ENCODE measurements at regions of chr7 and their contacts with region 1.

Region 1: GRCh38 chr7:118590107-118590506 is 365.6 kb downstream of the ANKRD7 start:
- DNase-seq: peak; percentile 20
- H3K4me3 ChIP-seq: no peak overlapping the region
- H3K27ac ChIP-seq: no peak overlapping the region
- H3K4me1 ChIP-seq: no peaks in the 10 kb centered on the region
- H3K27me3 ChIP-seq: peaks cover 2% of the 10 kb centered on the region
- CTCF ChIP-seq: peak; percentile 18 to 55

Region 2: DNA sequence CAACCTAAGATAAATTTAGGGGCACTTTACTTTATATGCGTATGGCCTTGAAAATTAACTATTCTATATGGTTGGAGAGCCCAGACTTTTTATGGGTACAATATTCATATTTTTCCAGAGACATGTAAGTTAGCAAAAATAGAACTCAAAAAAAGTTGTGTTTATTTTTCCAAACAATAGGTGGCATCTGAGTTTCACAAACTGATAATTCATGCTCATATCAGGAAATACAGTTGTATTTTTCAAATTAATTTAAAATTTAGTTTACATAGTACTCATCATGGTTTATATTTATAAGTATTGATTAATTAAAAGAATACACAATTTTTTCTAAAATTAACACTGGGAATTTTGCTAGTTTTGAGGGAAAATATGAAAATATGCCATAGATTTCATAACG is 331.0 kb before region 1 on chr7:
- CTCF ChIA-PET with region 1: no interaction called
- dilution Hi-C with region 1: no loop called
- in situ Hi-C with region 1: no loop called
- intact Hi-C with region 1: loop called (anchors 1 kb)
- DNase-seq: no peak
- H3K4me3 ChIP-seq: no peak overlapping the region
- H3K27ac ChIP-seq: no peak overlapping the region
- H3K4me1 ChIP-seq: no peaks in the 10 kb centered on the region
- H3K27me3 ChIP-seq: no peaks in the 10 kb centered on the region
- CTCF ChIP-seq: peak; percentile 21 to 42

Region 3: GRCh38 chr7:118352854-118353453 is 237.2 kb before region 1 on chr7:
- CTCF ChIA-PET with region 1: no interaction called
- dilution Hi-C with region 1: no loop called
- in situ Hi-C with region 1: no loop called
- intact Hi-C with region 1: loop called (anchors 1 kb)
- DNase-seq: peak; percentile 10
- H3K4me3 ChIP-seq: no peak overlapping the region
- H3K27ac ChIP-seq: no peak overlapping the region
- H3K4me1 ChIP-seq: no peaks in the 10 kb centered on the region
- H3K27me3 ChIP-seq: no peaks in the 10 kb centered on the region
- CTCF ChIP-seq: peak; percentile 31 to 54

Region 4: GRCh38 chr7:118696879-118697278 is 106.8 kb after region 1 on chr7:
- CTCF ChIA-PET with region 1: no interaction called
- dilution Hi-C with region 1: no loop called
- in situ Hi-C with region 1: no loop called
- intact Hi-C with region 1: no loop called
- DNase-seq: no peak
- H3K4me3 ChIP-seq: no peak overlapping the region
- H3K27ac ChIP-seq: no peak overlapping the region
- H3K4me1 ChIP-seq: no peaks in the 10 kb centered on the region
- H3K27me3 ChIP-seq: peaks cover 5% of the 10 kb centered on the region
- CTCF ChIP-seq: no peak